GM12878 (cell line): ENCODE measurements at regions of chr19 and their contacts with region 1.

Region 1: DNA sequence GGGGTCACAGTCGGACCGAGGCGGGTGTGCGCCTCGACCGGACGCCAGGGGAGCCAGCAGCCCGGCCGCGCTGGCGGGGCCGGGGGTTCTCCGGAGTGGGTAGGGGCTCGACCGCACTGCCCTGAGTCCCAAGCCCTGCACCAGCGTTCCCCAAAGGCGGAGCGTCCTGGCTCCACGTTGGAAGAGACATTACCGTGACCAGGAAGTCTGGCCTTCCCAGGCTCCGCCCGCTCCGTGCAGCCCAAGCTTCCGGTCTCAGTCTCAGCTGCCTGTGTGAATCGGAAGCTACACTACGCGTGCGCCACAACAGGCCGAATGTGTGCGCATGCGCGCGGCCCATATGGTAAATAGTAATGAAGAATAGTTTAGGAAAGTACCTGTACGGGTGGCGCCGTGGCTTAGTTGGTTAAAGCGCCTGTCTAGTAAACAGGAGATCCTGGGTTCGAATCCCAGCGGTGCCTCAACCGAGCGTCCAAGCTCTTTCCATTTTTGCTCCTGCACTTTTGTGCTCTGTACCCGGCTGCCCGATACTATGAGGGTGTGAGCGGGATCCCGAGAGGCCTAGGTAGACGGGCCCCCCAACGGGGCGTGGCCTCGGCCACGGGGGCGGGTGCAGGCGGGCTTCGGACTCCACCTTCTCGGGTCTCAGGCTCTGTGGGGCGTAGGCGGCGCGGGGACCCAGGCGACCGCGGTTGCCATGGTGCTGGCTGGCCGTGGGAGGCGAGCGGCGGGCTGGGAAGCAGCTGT is 17.3 kb upstream of the LRP3 start:
- DNase-seq: peak; percentile 97
- ATAC-seq: peak; percentile 93
- H3K4me3 ChIP-seq: peak overlapping the region; percentile 81
- H3K27ac ChIP-seq: peak overlapping the region; percentile 92
- H3K4me1 ChIP-seq: peaks cover 12% of the 10 kb centered on the region
- H3K27me3 ChIP-seq: no peaks in the 10 kb centered on the region
- CTCF ChIP-seq: 0 out of 6 replicates have a peak, but pooled peaks of 1 of the 3 experiments have one; percentile 1
- EP300 ChIP-seq: peak in 1 of 2 experiments; percentile 18; a peak in 1 of 4 replicates
- POLR2A ChIP-seq: peak; percentile 99
- RAD21 ChIP-seq: no peak

Region 2: DNA sequence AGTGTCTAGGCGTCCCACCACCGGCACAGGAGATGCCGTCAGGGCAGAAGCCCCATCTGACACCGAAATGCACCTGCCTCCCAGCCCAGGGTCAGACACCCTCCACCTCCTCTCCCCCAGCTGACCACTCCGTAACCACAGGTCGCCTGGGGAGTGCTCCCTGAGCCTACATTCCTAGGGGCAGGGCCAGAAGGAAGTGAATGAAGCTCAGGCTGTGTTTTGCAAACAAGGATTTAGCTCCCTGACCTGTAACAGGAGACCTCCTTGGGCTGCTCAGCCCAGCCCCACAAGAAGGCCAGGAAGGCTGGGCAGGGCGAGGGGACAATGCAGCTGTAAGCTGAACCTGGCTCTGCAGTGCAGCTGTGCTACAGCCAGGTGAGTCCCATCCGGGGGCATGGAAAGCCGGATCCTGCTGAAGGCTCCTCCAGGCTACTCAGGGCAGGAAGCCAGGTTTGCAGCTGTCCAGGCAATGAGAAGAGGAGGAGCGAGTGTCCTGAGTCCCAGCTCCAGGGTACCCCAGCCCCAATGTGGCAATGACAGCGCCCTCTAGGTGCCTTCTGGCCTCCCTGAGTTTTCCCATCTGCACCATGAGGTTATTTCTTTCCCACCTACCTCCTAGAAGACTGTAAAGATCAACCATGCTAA is 154.2 kb before region 1 on chr19:
- CTCF ChIA-PET with region 1: no interaction called
- POLR2A ChIA-PET with region 1: no interaction called
- RAD21 ChIA-PET with region 1: no interaction called
- SMC1A ChIA-PET with region 1: no interaction called
- in situ Hi-C with region 1: no loop called
- intact Hi-C with region 1: no loop called
- DNase-seq: no peak
- ATAC-seq: no peak
- H3K4me3 ChIP-seq: no peak overlapping the region
- H3K27ac ChIP-seq: no peak overlapping the region
- H3K4me1 ChIP-seq: no peaks in the 10 kb centered on the region
- H3K27me3 ChIP-seq: no peaks in the 10 kb centered on the region
- CTCF ChIP-seq: no peak
- EP300 ChIP-seq: no peak
- POLR2A ChIP-seq: no peak
- RAD21 ChIP-seq: no peak

Region 3: GRCh38 chr19:33052352-33052972 is 124.4 kb before region 1 on chr19:
- CTCF ChIA-PET with region 1: no interaction called
- POLR2A ChIA-PET with region 1: no interaction called
- RAD21 ChIA-PET with region 1: no interaction called
- SMC1A ChIA-PET with region 1: no interaction called
- in situ Hi-C with region 1: no loop called
- intact Hi-C with region 1: no loop called
- DNase-seq: no peak
- ATAC-seq: no peak
- H3K4me3 ChIP-seq: no peak overlapping the region
- H3K27ac ChIP-seq: no peak overlapping the region
- H3K4me1 ChIP-seq: no peaks in the 10 kb centered on the region
- H3K27me3 ChIP-seq: no peaks in the 10 kb centered on the region
- CTCF ChIP-seq: no peak
- EP300 ChIP-seq: no peak
- POLR2A ChIP-seq: no peak
- RAD21 ChIP-seq: no peak

Region 4: DNA sequence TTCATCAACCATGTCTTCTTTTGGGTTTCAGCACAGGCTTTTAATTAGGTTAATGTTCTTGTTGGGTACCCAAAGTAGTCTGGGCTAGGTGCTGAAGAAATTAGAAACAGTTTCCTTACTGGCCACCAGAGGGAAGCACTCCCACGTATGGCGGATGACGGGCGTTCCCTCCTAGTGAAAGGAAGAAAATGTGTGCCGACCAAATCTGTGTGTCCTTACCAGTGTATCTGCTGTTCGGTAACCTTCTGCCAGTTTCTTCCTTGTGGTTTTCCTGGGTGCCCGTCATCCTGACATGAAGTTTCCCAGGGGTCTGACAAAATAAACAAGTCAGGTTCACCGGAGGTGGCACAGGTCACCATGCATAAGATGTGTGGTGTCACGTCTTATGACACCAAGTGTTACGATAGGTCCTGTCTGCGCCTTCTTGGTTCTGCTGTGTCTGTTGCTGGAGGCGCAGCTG is 50.9 kb before region 1 on chr19:
- CTCF ChIA-PET with region 1: interaction called, 8 read pairs
- POLR2A ChIA-PET with region 1: no interaction called
- RAD21 ChIA-PET with region 1: no interaction called
- SMC1A ChIA-PET with region 1: interaction called, 8 read pairs
- in situ Hi-C with region 1: no loop called
- intact Hi-C with region 1: loop called (anchors 5 kb)
- DNase-seq: peak; percentile 16
- ATAC-seq: peak; percentile 93
- H3K4me3 ChIP-seq: no peak overlapping the region
- H3K27ac ChIP-seq: no peak overlapping the region
- H3K4me1 ChIP-seq: no peaks in the 10 kb centered on the region
- H3K27me3 ChIP-seq: no peaks in the 10 kb centered on the region
- CTCF ChIP-seq: peak; percentile 79 to 86 (median 82)
- EP300 ChIP-seq: no peak
- POLR2A ChIP-seq: no peak
- RAD21 ChIP-seq: peak; percentile 74

Region 5: GRCh38 chr19:33143897-33144405 is 32.9 kb before region 1 on chr19:
- CTCF ChIA-PET with region 1: interaction called, 23 read pairs
- POLR2A ChIA-PET with region 1: no interaction called
- RAD21 ChIA-PET with region 1: no interaction called
- SMC1A ChIA-PET with region 1: interaction called, 4 read pairs
- in situ Hi-C with region 1: no loop called
- intact Hi-C with region 1: loop called (anchors 2 kb)
- DNase-seq: no peak
- ATAC-seq: peak; percentile 99
- H3K4me3 ChIP-seq: no peak overlapping the region
- H3K27ac ChIP-seq: no peak overlapping the region
- H3K4me1 ChIP-seq: no peaks in the 10 kb centered on the region
- H3K27me3 ChIP-seq: no peaks in the 10 kb centered on the region
- CTCF ChIP-seq: peak; percentile 91 to 95 (median 94)
- EP300 ChIP-seq: no peak
- POLR2A ChIP-seq: no peak
- RAD21 ChIP-seq: peak; percentile 88

Region 6: GRCh38 chr19:33194886-33195649 is 18.2 kb after region 1 on chr19:
- CTCF ChIA-PET with region 1: interaction called, 14 read pairs
- POLR2A ChIA-PET with region 1: no interaction called
- RAD21 ChIA-PET with region 1: no interaction called
- SMC1A ChIA-PET with region 1: interaction called, 6 read pairs
- in situ Hi-C with region 1: no loop called
- intact Hi-C with region 1: no loop called
- DNase-seq: no peak
- ATAC-seq: no peak
- H3K4me3 ChIP-seq: no peak overlapping the region
- H3K27ac ChIP-seq: no peak overlapping the region
- H3K4me1 ChIP-seq: peaks cover 5% of the 10 kb centered on the region
- H3K27me3 ChIP-seq: peaks cover 0 to 5% of the 10 kb centered on the region in 2 experiments; a peak in 3 of 4 replicates
- CTCF ChIP-seq: no peak
- EP300 ChIP-seq: no peak
- POLR2A ChIP-seq: no peak
- RAD21 ChIP-seq: no peak

Region 7: GRCh38 chr19:33373701-33374421 is 197.0 kb after region 1 on chr19 and contains the start of gene CEBPG:
- CTCF ChIA-PET with region 1: interaction called, 3 read pairs
- POLR2A ChIA-PET with region 1: interaction called, 5 read pairs
- RAD21 ChIA-PET with region 1: interaction called, 9 read pairs
- SMC1A ChIA-PET with region 1: interaction called, 3 read pairs
- in situ Hi-C with region 1: no loop called
- intact Hi-C with region 1: loop called (anchors 5 kb)
- DNase-seq: no peak
- ATAC-seq: peak; percentile 52
- H3K4me3 ChIP-seq: peak within 1 kb of the TSS; percentile 91
- H3K27ac ChIP-seq: peak within 1 kb of the TSS; percentile 86
- H3K4me1 ChIP-seq: no peaks in the 10 kb centered on the region; the same call in 1 of the 2 replicates
- H3K27me3 ChIP-seq: no peaks in the 10 kb centered on the region
- CTCF ChIP-seq: peak in 2 of 3 experiments; percentile 7 to 24; a peak in 2 of 6 replicates
- EP300 ChIP-seq: 0 out of 4 replicates have a peak, but pooled peaks of 1 of the 2 experiments have one; percentile 9
- POLR2A ChIP-seq: peak; percentile 96
- RAD21 ChIP-seq: no peak
- polyA plus RNA-seq, gene CEBPG: 5.2 to 8.1 TPM